Activated CD4-positive, alpha-beta memory T cell treated with anti-CD3 and anti-CD28 coated beads for 36 hours (primary cell): ENCODE measurements at regions of chr15 and their contacts with region 1.

Region 1: DNA sequence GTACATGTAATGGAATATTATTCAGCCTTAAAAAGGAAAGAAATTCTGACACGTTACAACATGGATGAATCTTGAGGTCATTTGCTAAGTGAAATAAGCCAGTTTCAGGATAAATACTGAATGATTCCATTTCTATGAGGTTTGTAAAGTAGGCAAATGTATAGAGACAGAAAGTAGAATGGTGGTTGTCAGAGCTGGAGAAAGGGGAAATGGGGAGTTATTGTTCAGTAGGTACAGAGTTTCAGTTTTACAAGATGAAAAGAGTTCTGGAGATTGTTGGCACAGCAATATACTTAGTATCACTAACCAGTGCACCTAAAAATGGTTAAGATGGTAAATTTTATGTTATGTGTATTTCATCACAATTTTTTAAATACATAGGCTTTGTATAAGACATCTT is 60.6 kb downstream of the USP8 start:
- DNase-seq: no peak
- H3K4me3 Mint-ChIP-seq: no peak overlapping the region
- H3K27ac Mint-ChIP-seq: no peak overlapping the region
- H3K4me1 Mint-ChIP-seq: peaks cover 29% of the 10 kb centered on the region
- H3K27me3 Mint-ChIP-seq: no peaks in the 10 kb centered on the region

Region 2: DNA sequence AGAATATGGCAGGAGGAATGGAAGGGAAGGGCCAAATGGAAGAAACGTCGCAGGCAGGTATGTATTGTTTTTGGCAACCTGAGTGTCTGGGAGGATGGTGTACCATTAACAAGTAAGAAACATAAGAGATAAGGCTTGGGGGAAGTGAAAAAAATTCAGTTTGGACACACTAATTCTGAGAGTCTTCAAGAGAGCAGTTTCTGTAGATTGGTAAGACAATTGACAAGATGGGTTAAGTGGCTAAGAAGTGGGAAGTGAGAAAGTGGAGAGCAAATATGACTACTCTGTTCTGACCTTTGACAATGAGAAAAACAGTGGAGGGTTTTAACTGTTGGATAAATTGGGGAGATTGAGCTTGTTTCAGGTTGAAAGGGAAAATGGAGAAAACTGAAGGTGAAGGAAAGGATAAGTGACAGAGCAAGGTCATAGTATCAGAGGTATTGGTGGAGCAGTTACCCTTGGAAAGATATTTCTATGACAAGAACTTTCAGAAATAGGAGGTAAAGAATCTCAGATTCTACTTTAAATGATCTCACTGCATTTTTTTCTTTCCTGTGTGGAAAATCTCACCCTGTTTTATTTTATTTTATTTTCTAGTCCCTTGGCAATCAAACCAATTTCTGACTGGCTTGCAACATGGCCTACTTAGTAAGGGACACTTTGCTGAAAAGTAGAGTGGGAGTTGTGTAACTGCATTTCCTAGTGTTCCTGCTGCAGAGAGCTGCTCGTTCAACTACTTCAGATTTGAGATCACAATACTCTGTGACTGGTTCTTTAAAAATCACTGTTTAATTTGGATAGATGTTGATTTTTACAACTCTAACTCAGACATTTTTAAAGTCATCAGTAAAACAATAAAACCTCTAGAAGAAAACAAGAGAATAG is 106.7 kb before region 1 on chr15:
- CTCF ChIA-PET with region 1: no interaction called
- POLR2A ChIA-PET with region 1: no interaction called
- intact Hi-C with region 1: loop called (anchors 5 kb)
- DNase-seq: no peak
- H3K4me3 Mint-ChIP-seq: no peak overlapping the region
- H3K27ac Mint-ChIP-seq: peak overlapping the region; percentile 76
- H3K4me1 Mint-ChIP-seq: peaks cover 17% of the 10 kb centered on the region
- H3K27me3 Mint-ChIP-seq: peaks cover 3% of the 10 kb centered on the region

Region 3: DNA sequence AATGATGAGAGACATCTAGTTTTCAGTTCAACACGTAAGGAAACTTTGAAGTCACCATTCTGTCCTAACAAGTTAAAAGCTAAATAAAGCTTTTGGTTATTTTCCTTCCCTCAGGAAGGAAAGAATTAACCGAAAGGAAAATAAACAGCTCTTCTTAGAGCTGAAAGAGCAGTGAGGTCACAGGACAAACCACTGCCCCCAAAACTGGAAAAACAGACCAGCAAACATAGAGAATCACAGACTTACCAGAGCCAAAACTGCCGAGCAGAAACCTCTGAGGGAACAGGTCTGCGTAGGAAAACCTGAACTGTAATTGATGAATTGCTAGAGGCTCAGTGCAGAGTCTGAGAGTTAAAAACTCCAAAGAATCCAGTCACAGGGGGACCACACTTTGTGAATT is 47.0 kb after region 1 on chr15:
- CTCF ChIA-PET with region 1: no interaction called
- POLR2A ChIA-PET with region 1: no interaction called
- intact Hi-C with region 1: no loop called
- DNase-seq: no peak
- H3K4me3 Mint-ChIP-seq: no peak overlapping the region
- H3K27ac Mint-ChIP-seq: no peak overlapping the region
- H3K4me1 Mint-ChIP-seq: no peaks in the 10 kb centered on the region
- H3K27me3 Mint-ChIP-seq: no peaks in the 10 kb centered on the region

Region 4: GRCh38 chr15:50562735-50563640 is 78.2 kb after region 1 on chr15:
- CTCF ChIA-PET with region 1: no interaction called
- POLR2A ChIA-PET with region 1: no interaction called
- intact Hi-C with region 1: loop called (anchors 10 kb)
- DNase-seq: peak; percentile 38
- H3K4me3 Mint-ChIP-seq: no peak overlapping the region
- H3K27ac Mint-ChIP-seq: peak overlapping the region; percentile 72
- H3K4me1 Mint-ChIP-seq: peaks cover 23% of the 10 kb centered on the region
- H3K27me3 Mint-ChIP-seq: no peaks in the 10 kb centered on the region

Region 5: DNA sequence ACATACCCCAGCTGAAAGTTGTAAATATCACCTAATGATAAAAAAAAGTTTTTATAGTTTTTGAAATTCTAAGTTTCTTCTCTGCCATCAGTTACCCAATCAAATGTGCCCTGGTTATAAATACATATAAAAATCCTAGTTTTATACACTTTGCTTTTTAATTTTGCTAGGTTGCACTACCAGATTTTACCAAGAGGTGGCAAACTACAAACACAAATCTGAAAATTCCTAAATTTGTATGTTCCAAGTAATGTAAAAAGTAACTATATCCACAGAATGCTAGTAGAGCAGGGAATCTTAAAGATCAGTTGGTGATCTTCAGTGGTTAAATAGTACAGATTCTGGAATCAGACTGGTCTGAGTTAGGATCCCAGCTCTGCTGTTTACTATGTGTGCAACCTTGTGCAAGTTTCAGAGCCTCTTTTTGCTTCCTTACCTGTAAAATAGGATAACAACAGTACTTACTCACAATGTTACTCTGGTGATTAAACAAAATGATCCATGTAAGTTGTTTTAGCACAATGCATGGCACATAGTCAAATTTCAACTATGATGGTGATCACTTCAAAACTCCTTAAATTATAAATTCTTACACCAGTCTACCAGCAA is 190.9 kb after region 1 on chr15:
- CTCF ChIA-PET with region 1: no interaction called
- POLR2A ChIA-PET with region 1: no interaction called
- intact Hi-C with region 1: no loop called
- DNase-seq: no peak
- H3K4me3 Mint-ChIP-seq: no peak overlapping the region
- H3K27ac Mint-ChIP-seq: peak overlapping the region; percentile 33
- H3K4me1 Mint-ChIP-seq: peaks cover 40% of the 10 kb centered on the region
- H3K27me3 Mint-ChIP-seq: no peaks in the 10 kb centered on the region

Region 6: GRCh38 chr15:50718700-50719125 is 233.9 kb after region 1 on chr15:
- CTCF ChIA-PET with region 1: no interaction called
- POLR2A ChIA-PET with region 1: no interaction called
- intact Hi-C with region 1: no loop called
- DNase-seq: no peak
- H3K4me3 Mint-ChIP-seq: no peak overlapping the region
- H3K27ac Mint-ChIP-seq: no peak overlapping the region
- H3K4me1 Mint-ChIP-seq: no peaks in the 10 kb centered on the region
- H3K27me3 Mint-ChIP-seq: no peaks in the 10 kb centered on the region